ENCODE measurements at regions of chr2 and their contacts with region 1.

Region 1: GRCh38 chr2:30711646-30712085 is 95.6 kb downstream of the CAPN13 start:
- DNase-seq: peak; percentile 95
- H3K4me3 Mint-ChIP-seq: no peak overlapping the region
- H3K27ac Mint-ChIP-seq: no peak overlapping the region
- H3K4me1 Mint-ChIP-seq: peaks cover 4% of the 10 kb centered on the region
- H3K27me3 Mint-ChIP-seq: no peaks in the 10 kb centered on the region

Region 2: GRCh38 chr2:30095402-30095801 is 616.3 kb before region 1 on chr2:
- CTCF ChIA-PET with region 1: interaction called, 16 read pairs
- intact Hi-C with region 1: loop called (anchors 2 kb)
- DNase-seq: no peak
- H3K4me3 Mint-ChIP-seq: no peak overlapping the region
- H3K27ac Mint-ChIP-seq: no peak overlapping the region
- H3K4me1 Mint-ChIP-seq: no peaks in the 10 kb centered on the region
- H3K27me3 Mint-ChIP-seq: peaks cover 10% of the 10 kb centered on the region

Region 3: GRCh38 chr2:30155889-30156658 is 555.6 kb before region 1 on chr2:
- CTCF ChIA-PET with region 1: interaction called, 32 read pairs
- intact Hi-C with region 1: no loop called
- DNase-seq: no peak
- H3K4me3 Mint-ChIP-seq: no peak overlapping the region
- H3K27ac Mint-ChIP-seq: peak overlapping the region; percentile 26
- H3K4me1 Mint-ChIP-seq: peaks cover 43% of the 10 kb centered on the region
- H3K27me3 Mint-ChIP-seq: no peaks in the 10 kb centered on the region

Region 4: GRCh38 chr2:30225131-30225762 is 486.4 kb before region 1 on chr2:
- CTCF ChIA-PET with region 1: interaction called, 10 read pairs
- intact Hi-C with region 1: no loop called
- DNase-seq: peak; percentile 60
- H3K4me3 Mint-ChIP-seq: peak overlapping the region; percentile 81
- H3K27ac Mint-ChIP-seq: peak overlapping the region; percentile 87
- H3K4me1 Mint-ChIP-seq: peaks cover 64% of the 10 kb centered on the region
- H3K27me3 Mint-ChIP-seq: peaks cover 3% of the 10 kb centered on the region

Region 5: DNA sequence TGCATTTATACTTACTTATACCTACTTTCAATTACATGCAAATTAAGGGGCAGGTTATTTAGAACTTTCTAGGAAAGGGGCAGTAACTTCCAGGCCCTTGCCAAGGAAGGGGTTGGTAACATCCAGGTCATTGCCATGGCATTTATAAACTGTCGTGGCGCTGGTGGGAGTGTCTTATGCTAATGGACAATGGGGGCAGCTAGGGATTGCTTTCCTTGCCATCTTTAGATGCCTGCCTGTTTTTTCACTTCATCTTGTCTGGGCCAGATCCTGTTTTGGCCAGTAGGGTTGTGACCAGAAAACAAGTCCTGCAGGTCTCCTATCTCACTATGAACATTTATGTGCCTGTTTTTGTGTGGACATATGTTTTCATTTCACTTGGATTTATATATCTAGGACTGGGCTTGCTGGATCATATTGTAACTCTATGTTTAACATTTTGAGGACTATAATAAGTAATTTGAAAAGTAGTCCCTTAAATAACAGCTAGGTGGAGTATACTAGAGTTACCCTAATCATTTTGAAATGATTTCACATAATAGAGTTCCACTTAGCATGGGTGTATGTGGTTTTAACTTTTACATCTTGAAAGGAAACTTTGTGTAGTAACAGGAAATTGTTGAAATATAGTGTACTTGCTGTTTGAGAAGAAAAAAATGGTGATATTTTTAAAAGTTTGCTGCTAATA is 208.5 kb before region 1 on chr2:
- CTCF ChIA-PET with region 1: interaction called, 3 read pairs
- intact Hi-C with region 1: loop called (anchors 10 kb)
- DNase-seq: no peak
- H3K4me3 Mint-ChIP-seq: no peak overlapping the region
- H3K27ac Mint-ChIP-seq: peak overlapping the region; percentile 64
- H3K4me1 Mint-ChIP-seq: peaks cover 42% of the 10 kb centered on the region
- H3K27me3 Mint-ChIP-seq: no peaks in the 10 kb centered on the region

Region 6: GRCh38 chr2:30691948-30692828 is 19.5 kb before region 1 on chr2:
- CTCF ChIA-PET with region 1: interaction called, 118 read pairs
- intact Hi-C with region 1: no loop called
- DNase-seq: peak; percentile 22
- H3K4me3 Mint-ChIP-seq: no peak overlapping the region
- H3K27ac Mint-ChIP-seq: no peak overlapping the region
- H3K4me1 Mint-ChIP-seq: no peaks in the 10 kb centered on the region
- H3K27me3 Mint-ChIP-seq: no peaks in the 10 kb centered on the region

Region 7: GRCh38 chr2:31170071-31170698 is 458.5 kb after region 1 on chr2:
- CTCF ChIA-PET with region 1: interaction called, 93 read pairs
- intact Hi-C with region 1: loop called (anchors 1 kb)
- DNase-seq: peak; percentile 68
- H3K4me3 Mint-ChIP-seq: no peak overlapping the region
- H3K27ac Mint-ChIP-seq: no peak overlapping the region
- H3K4me1 Mint-ChIP-seq: no peaks in the 10 kb centered on the region
- H3K27me3 Mint-ChIP-seq: peaks cover 3% of the 10 kb centered on the region